ENCODE measurements at regions of chr5 and their contacts with region 1.

Region 1: GRCh38 chr5:9544502-9545135 is 1.3 kb downstream of the SEMA5A start:
- DNase-seq: no peak
- ATAC-seq: peak; percentile 97
- H3K4me3 ChIP-seq: peak overlapping the region; percentile 46
- H3K27ac ChIP-seq: no peak overlapping the region
- H3K4me1 ChIP-seq: peaks cover 3% of the 10 kb centered on the region; the same call in 1 of the 2 replicates
- H3K27me3 ChIP-seq: peaks cover 1 to 9% of the 10 kb centered on the region in 2 experiments
- CTCF ChIP-seq: peak; percentile 77 to 89 (median 78)
- EP300 ChIP-seq: no peak
- POLR2A ChIP-seq: no peak
- RAD21 ChIP-seq: peak; percentile 90

Region 2: DNA sequence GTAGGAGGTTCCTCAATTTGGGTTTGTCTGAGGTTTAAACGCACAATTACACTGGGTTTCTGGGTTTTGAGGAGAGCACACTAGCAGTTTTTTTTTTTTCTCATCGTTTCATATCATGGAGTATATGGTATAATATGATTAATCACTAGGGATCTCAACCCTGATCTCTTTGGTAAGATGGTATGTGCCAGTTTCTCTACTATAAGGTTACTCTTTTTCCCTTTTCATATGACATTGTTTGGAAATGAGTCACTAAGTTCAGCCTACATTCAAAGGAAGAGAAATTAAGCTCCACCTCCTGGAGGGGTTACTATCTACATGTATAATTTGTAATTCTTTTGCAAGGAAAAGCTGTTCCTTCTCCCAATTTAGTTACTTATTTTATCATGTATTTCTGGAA is 1640.4 kb before region 1 on chr5:
- CTCF ChIA-PET with region 1: no interaction called
- POLR2A ChIA-PET with region 1: no interaction called
- RAD21 ChIA-PET with region 1: no interaction called
- SMC1A ChIA-PET with region 1: no interaction called
- in situ Hi-C with region 1: loop called (anchors 25 kb)
- intact Hi-C with region 1: no loop called
- DNase-seq: no peak
- ATAC-seq: peak; percentile 56
- H3K4me3 ChIP-seq: no peak overlapping the region
- H3K27ac ChIP-seq: no peak overlapping the region
- H3K4me1 ChIP-seq: no peaks in the 10 kb centered on the region
- H3K27me3 ChIP-seq: no peaks in the 10 kb centered on the region
- CTCF ChIP-seq: no peak
- EP300 ChIP-seq: no peak
- POLR2A ChIP-seq: no peak
- RAD21 ChIP-seq: no peak

Region 3: GRCh38 chr5:9464478-9464877 is 80.1 kb before region 1 on chr5:
- CTCF ChIA-PET with region 1: no interaction called
- POLR2A ChIA-PET with region 1: no interaction called
- RAD21 ChIA-PET with region 1: no interaction called
- SMC1A ChIA-PET with region 1: no interaction called
- in situ Hi-C with region 1: no loop called
- intact Hi-C with region 1: no loop called
- DNase-seq: no peak
- ATAC-seq: no peak
- H3K4me3 ChIP-seq: no peak overlapping the region
- H3K27ac ChIP-seq: no peak overlapping the region
- H3K4me1 ChIP-seq: no peaks in the 10 kb centered on the region
- H3K27me3 ChIP-seq: no peaks in the 10 kb centered on the region
- CTCF ChIP-seq: no peak
- EP300 ChIP-seq: no peak
- POLR2A ChIP-seq: no peak
- RAD21 ChIP-seq: no peak

Region 4: GRCh38 chr5:9519537-9519936 is 25.1 kb before region 1 on chr5:
- CTCF ChIA-PET with region 1: interaction called, 11 read pairs
- POLR2A ChIA-PET with region 1: no interaction called
- RAD21 ChIA-PET with region 1: no interaction called
- SMC1A ChIA-PET with region 1: interaction called, 3 read pairs
- in situ Hi-C with region 1: no loop called
- intact Hi-C with region 1: no loop called
- DNase-seq: no peak
- ATAC-seq: peak; percentile 38; the same call in 1 of the 3 replicates
- H3K4me3 ChIP-seq: no peak overlapping the region
- H3K27ac ChIP-seq: no peak overlapping the region
- H3K4me1 ChIP-seq: no peaks in the 10 kb centered on the region
- H3K27me3 ChIP-seq: no peaks in the 10 kb centered on the region
- CTCF ChIP-seq: no peak
- EP300 ChIP-seq: no peak
- POLR2A ChIP-seq: no peak
- RAD21 ChIP-seq: no peak